ENCODE measurements at regions of chr12 and their contacts with region 1.

Region 1: GRCh38 chr12:9925708-9926393 is 6.3 kb downstream of the CLEC2A start:
- DNase-seq: peak; percentile 60
- H3K4me3 ChIP-seq: no peak overlapping the region
- H3K27ac ChIP-seq: no peak overlapping the region
- H3K4me1 ChIP-seq: no peaks in the 10 kb centered on the region
- H3K27me3 ChIP-seq: peaks cover 0 to 2% of the 10 kb centered on the region in 2 experiments
- CTCF ChIP-seq: peak; percentile 31 to 39
- POLR2A ChIP-seq: no peak

Region 2: DNA sequence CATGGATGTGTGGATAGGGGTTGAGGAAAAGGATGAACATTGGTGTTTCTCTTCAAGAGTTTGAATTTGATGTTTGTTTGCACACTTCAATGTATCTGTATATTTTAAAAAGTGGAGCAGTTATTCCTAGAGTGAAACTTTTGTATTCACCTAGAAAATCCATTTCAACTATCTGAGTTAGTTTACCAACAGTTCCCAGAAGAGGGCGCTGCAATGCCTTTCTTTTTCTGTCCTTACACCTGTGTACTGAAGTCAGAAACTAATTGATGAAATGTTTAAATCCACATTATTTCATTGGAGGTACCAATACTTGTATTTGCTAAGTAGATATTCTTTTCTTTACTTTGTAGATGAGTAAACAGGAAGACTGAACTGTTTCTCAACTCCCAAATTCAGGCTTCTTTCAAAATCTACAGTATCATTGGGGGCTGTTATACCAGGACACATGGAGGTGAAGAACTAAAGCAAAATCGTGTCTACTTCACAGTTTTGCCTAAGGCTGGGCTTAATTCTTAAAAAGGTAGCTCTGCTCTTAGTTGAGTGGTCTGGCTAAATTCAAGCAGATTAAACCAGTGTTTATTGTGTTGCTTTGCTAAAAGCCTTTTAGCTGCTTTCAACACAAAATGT is 291.6 kb before region 1 on chr12:
- CTCF ChIA-PET with region 1: no interaction called
- POLR2A ChIA-PET with region 1: no interaction called
- dilution Hi-C with region 1: no loop called
- intact Hi-C with region 1: loop called (anchors 5 kb)
- DNase-seq: peak; percentile 70
- H3K4me3 ChIP-seq: no peak overlapping the region
- H3K27ac ChIP-seq: no peak overlapping the region
- H3K4me1 ChIP-seq: no peaks in the 10 kb centered on the region
- H3K27me3 ChIP-seq: no peaks in the 10 kb centered on the region
- CTCF ChIP-seq: peak; percentile 55 to 57
- POLR2A ChIP-seq: no peak

Region 3: GRCh38 chr12:9869307-9870161 is 56.3 kb before region 1 on chr12 and contains the start of gene CLEC2B:
- CTCF ChIA-PET with region 1: interaction called, 5 read pairs
- POLR2A ChIA-PET with region 1: no interaction called
- dilution Hi-C with region 1: no loop called
- intact Hi-C with region 1: loop called (anchors 5 kb)
- DNase-seq: peak; percentile 92
- H3K4me3 ChIP-seq: peak within 1 kb of the TSS; percentile 28 to 93 (median 73)
- H3K27ac ChIP-seq: peak within 1 kb of the TSS; percentile 96
- H3K4me1 ChIP-seq: peaks cover 31% of the 10 kb centered on the region
- H3K27me3 ChIP-seq: no peaks in the 10 kb centered on the region
- CTCF ChIP-seq: no peak
- POLR2A ChIP-seq: peak; percentile 60
- total RNA-seq, gene CLEC2B: 16.4 and 18.3 TPM in 2 replicates